ENCODE measurements at regions of chr12 and their contacts with region 1.

Region 1: GRCh38 chr12:56127888-56128669 is at the start of gene ESYT1:
- DNase-seq: peak; percentile 100
- H3K4me3 ChIP-seq: peak within 1 kb of the TSS; percentile 83
- H3K27ac ChIP-seq: peak within 1 kb of the TSS; percentile 96
- H3K4me1 ChIP-seq: peaks cover 48% of the 10 kb centered on the region
- CTCF ChIP-seq: no peak
- total RNA-seq, gene ESYT1: 74.6 and 85.9 TPM in 2 replicates

Region 2: DNA sequence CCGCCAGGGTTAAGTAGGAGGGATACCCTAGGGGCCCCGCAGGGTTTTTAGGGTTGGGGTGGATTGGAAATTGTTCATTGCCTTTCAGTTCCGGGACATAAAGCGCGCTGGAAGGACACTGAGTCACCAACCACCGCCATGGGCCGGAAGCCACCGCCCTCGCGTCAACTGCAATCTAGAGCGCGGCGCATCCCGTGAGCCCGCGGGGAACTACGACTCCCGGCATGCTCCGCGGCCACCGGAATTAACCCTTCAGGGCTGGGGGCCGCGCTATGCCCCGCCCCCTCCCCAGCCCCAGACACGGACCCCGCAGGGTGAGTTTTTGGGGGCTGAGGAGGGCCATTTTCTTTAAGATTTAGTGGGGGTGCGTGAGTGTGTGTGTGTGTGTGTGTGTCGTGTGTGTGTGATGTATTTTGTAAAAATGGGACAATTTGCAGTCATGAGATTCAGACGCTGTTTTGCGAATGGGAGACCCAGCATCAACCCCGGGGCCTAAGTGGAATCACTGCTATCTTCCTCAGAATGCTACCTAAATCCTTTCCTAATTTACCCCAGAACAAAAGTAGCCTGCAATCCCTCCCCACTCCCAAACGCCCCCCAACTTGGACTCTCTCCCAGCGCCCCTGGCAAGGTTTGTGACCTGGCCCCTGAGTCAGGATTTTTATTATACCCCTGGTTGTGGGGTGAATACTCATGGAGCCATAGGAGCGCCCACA is 24.4 kb after region 1 on chr12 and contains the start of gene MYL6B:
- CTCF ChIA-PET with region 1: no interaction called
- POLR2A ChIA-PET with region 1: interaction called, 13 read pairs
- intact Hi-C with region 1: loop called (anchors 1 kb)
- DNase-seq: peak; percentile 95
- H3K4me3 ChIP-seq: peak within 1 kb of the TSS; percentile 77
- H3K27ac ChIP-seq: peak within 1 kb of the TSS; percentile 87
- H3K4me1 ChIP-seq: peaks cover 36% of the 10 kb centered on the region
- CTCF ChIP-seq: no peak
- total RNA-seq, gene MYL6B: 56.6 and 105 TPM in 2 replicates

Region 3: DNA sequence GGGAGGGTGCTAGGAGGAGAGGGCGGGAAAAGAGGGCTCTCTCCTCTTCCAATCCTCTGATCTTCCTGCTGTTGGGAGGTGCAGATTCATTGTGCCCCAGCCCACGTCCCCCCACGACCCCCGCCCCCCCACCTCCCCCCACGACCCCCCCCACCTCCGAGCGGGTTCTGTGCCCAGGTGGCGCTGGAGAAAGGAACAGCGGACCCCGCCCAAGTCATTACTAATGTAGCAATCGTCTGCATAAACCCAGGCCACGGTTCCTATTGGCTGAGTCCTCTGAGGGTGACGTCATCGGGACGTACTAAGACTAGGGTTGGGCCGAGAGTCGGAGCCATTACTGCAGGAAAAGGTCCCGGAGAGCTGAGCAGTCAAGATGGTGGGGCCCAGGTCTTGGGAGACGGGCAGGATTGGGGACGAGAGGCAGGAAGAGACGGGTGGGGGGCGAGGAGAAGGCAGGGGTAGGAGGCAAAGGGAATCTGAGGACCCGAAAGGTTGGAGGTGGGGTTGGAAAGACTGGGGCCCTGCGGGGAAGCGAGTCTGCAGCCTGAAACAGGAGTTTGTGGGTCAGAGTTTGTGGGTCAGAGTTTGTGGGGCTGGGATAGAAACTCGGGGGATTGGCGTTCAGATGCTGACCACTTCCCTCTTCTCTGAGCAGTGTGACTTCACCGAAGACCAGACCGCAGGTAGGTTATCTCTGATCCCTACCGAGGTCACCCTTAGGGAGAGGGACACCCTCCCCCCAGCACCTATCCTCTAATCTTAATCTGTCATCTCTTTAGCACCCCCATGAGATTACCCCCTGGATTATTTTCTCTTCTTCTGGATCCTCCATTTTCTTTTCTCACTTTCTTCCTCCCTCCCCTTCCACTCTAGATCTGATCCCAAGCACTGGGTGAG is 30.2 kb after region 1 on chr12 and contains the start of gene MYL6:
- CTCF ChIA-PET with region 1: no interaction called
- POLR2A ChIA-PET with region 1: interaction called, 9 read pairs
- intact Hi-C with region 1: loop called (anchors 1 kb)
- DNase-seq: peak; percentile 99
- H3K4me3 ChIP-seq: peak within 1 kb of the TSS; percentile 98
- H3K27ac ChIP-seq: peak within 1 kb of the TSS; percentile 82
- H3K4me1 ChIP-seq: peaks cover 45% of the 10 kb centered on the region
- CTCF ChIP-seq: 0 out of 2 replicates have a peak, but pooled peaks have one; percentile 3
- total RNA-seq, gene MYL6: 574 and 654 TPM in 2 replicates

Measured in OCI-LY7 (cell line).